ENCODE measurements at regions of chr5 and their contacts with region 1.

Region 1: DNA sequence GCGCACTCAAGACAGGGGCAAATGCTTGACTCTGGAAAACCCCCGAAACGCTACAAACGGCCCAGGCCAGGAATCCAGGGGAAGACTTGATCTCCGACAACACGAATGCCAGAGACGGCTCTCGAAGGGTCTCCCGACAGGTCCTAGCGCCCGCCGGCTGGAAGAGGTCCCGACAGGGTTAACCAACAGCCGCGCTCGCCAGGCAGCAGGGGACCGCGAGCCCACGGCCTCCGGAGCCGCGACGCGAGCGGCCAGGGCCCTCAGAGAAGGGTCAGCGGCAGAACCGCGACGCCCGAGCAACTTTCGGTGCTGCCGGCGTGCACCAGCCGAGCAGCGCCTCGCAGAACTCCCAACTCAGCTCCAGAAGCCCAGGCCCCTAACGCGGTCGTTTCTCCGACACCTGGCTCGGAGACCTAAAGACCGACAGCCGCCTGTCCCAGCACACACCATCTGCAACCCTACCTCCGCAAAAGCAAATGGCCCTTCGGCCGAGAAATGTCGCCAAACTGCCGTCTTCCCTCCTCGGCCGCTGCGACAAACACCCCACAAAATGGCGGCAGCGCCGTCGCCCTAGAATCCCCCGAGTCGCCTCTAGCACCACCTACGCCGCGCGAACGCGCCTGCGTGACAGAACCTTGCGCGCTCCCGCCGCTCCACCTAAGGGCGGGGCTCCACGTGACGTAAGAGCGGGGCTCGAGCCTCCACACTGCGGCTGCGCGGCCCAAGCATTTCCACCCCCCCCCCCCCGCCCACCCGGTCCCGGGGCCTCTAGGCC is at the start of gene CLK4:
- DNase-seq: peak; percentile 97
- H3K4me3 ChIP-seq: peak within 1 kb of the TSS; percentile 94
- H3K27ac ChIP-seq: peak within 1 kb of the TSS; percentile 77
- H3K4me1 ChIP-seq: peaks cover 28% of the 10 kb centered on the region
- CTCF ChIP-seq: no peak
- total RNA-seq, gene CLK4: 31.8 and 37.4 TPM in 2 replicates

Region 2: DNA sequence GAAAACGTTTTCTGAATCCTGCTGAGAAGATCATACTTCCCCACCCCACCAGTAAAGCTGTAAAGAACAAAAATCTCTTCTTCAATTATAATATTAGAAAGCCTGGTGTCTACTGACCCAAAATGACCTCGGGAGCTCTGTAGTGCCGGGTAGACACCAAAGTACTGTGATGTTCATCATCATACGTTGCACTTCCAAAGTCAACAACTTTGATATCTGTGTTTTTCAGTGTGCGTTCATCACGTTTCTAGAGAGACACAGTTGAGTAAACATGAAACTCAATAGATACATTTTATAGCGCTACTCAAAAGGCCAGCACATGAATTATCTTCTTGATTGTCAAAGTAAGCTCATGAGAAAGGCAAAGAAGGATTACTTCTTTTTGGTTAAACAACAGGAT is 14.4 kb before region 1 on chr5:
- CTCF ChIA-PET with region 1: no interaction called
- POLR2A ChIA-PET with region 1: interaction called, 31 read pairs
- intact Hi-C with region 1: no loop called
- DNase-seq: no peak
- H3K4me3 ChIP-seq: no peak overlapping the region
- H3K27ac ChIP-seq: no peak overlapping the region
- H3K4me1 ChIP-seq: no peaks in the 10 kb centered on the region
- CTCF ChIP-seq: no peak

Region 3: GRCh38 chr5:178732281-178732680 is 105.6 kb after region 1 on chr5:
- CTCF ChIA-PET with region 1: no interaction called
- POLR2A ChIA-PET with region 1: interaction called, 5 read pairs
- intact Hi-C with region 1: loop called (anchors 5 kb)
- DNase-seq: no peak
- H3K4me3 ChIP-seq: no peak overlapping the region
- H3K27ac ChIP-seq: no peak overlapping the region
- H3K4me1 ChIP-seq: peaks cover 4% of the 10 kb centered on the region
- CTCF ChIP-seq: no peak

Region 4: GRCh38 chr5:179550511-179551230 is 924.0 kb after region 1 on chr5 and contains the start of gene RUFY1:
- CTCF ChIA-PET with region 1: no interaction called
- POLR2A ChIA-PET with region 1: no interaction called
- intact Hi-C with region 1: loop called (anchors 2 kb)
- DNase-seq: peak; percentile 81
- H3K4me3 ChIP-seq: peak within 1 kb of the TSS; percentile 81
- H3K27ac ChIP-seq: peak within 1 kb of the TSS; percentile 86
- H3K4me1 ChIP-seq: peaks cover 42% of the 10 kb centered on the region
- CTCF ChIP-seq: no peak
- total RNA-seq, gene RUFY1: 35.8 and 46.2 TPM in 2 replicates

Measured in OCI-LY7 (cell line).